CD4-positive, alpha-beta T cell (primary cell): ENCODE measurements at regions of chr2 and their contacts with region 1.

Region 1: GRCh38 chr2:231339318-231339717 is 56.2 kb upstream of the B3GNT7 start:
- DNase-seq: no peak
- ATAC-seq: no peak
- H3K4me3 ChIP-seq: no peak overlapping the region
- H3K4me3 Mint-ChIP-seq: no peak overlapping the region
- H3K27ac ChIP-seq: no peak overlapping the region
- H3K27ac Mint-ChIP-seq: no peak overlapping the region
- H3K4me1 ChIP-seq: no peaks in the 10 kb centered on the region
- H3K4me1 Mint-ChIP-seq: no peaks in the 10 kb centered on the region
- H3K27me3 ChIP-seq: no peaks in the 10 kb centered on the region
- H3K27me3 Mint-ChIP-seq: no peaks in the 10 kb centered on the region
- CTCF ChIP-seq: no peak

Region 2: DNA sequence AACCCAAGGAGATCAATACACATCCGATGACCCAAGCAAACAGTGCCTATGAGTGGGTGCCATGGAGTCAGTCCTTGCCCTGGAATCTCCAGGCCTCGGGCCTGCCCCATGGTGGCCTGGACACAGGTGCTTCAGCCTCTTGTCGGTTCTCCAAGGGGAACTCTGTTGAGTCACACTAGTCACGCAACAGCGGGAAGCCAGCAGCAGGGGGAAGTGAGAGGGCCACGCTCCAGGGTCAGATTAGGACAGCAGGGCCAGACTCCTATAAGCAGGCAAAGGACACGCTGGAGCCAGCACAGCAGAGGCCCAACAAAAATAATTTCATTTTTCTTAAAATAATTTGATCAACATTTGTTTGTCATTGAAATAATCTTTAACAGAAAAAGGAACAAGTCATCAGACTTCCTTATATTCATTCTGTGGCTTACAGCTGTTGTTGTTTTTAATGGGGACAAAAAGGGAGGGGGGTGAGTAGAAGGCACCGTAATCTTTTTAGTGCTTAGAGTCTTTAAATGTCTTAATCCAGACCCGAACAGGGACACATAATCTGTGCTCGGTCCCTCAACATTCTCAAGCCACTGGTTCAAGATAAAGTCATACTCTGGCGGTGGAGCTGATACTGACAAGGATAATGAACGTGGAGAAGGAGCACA is 157.3 kb before region 1 on chr2:
- CTCF ChIA-PET with region 1: no interaction called
- POLR2A ChIA-PET with region 1: no interaction called
- intact Hi-C with region 1: no loop called
- DNase-seq: peak in 2 of 14 experiments; percentile 73 to 82
- ATAC-seq: no peak
- H3K4me3 ChIP-seq: no peak overlapping the region
- H3K4me3 Mint-ChIP-seq: no peak overlapping the region
- H3K27ac ChIP-seq: no peak overlapping the region
- H3K27ac Mint-ChIP-seq: no peak overlapping the region
- H3K4me1 ChIP-seq: no peaks in the 10 kb centered on the region
- H3K4me1 Mint-ChIP-seq: peaks cover 6% of the 10 kb centered on the region
- H3K27me3 ChIP-seq: no peaks in the 10 kb centered on the region
- H3K27me3 Mint-ChIP-seq: no peaks in the 10 kb centered on the region
- CTCF ChIP-seq: no peak

Region 3: GRCh38 chr2:231634951-231635875 is 295.9 kb after region 1 on chr2:
- CTCF ChIA-PET with region 1: no interaction called
- POLR2A ChIA-PET with region 1: no interaction called
- intact Hi-C with region 1: loop called in 1 of 2 experiments (anchors 5 kb)
- DNase-seq: no peak
- ATAC-seq: no peak
- H3K4me3 ChIP-seq: no peak overlapping the region
- H3K4me3 Mint-ChIP-seq: no peak overlapping the region
- H3K27ac ChIP-seq: no peak overlapping the region
- H3K27ac Mint-ChIP-seq: no peak overlapping the region
- H3K4me1 ChIP-seq: no peaks in the 10 kb centered on the region
- H3K4me1 Mint-ChIP-seq: no peaks in the 10 kb centered on the region
- H3K27me3 ChIP-seq: no peaks in the 10 kb centered on the region
- H3K27me3 Mint-ChIP-seq: no peaks in the 10 kb centered on the region
- CTCF ChIP-seq: no peak